ENCODE measurements at regions of chr15 and their contacts with region 1.

Region 1: GRCh38 chr15:31326156-31326732 is 391 bp upstream of the KLF13 start:
- DNase-seq: peak; percentile 97 to 100 (median 98)
- ATAC-seq: peak; percentile 80 to 92 (median 84)
- H3K4me3 ChIP-seq: peak overlapping the region; percentile 63 to 97 (median 81)
- H3K27ac ChIP-seq: peak overlapping the region; percentile 85 to 99 (median 98)
- H3K4me1 ChIP-seq: peaks cover 0 to 26% (median 11%) of the 10 kb centered on the region in 3 donors
- H3K27me3 ChIP-seq: no peaks in the 10 kb centered on the region
- CTCF ChIP-seq: no peak

Region 2: DNA sequence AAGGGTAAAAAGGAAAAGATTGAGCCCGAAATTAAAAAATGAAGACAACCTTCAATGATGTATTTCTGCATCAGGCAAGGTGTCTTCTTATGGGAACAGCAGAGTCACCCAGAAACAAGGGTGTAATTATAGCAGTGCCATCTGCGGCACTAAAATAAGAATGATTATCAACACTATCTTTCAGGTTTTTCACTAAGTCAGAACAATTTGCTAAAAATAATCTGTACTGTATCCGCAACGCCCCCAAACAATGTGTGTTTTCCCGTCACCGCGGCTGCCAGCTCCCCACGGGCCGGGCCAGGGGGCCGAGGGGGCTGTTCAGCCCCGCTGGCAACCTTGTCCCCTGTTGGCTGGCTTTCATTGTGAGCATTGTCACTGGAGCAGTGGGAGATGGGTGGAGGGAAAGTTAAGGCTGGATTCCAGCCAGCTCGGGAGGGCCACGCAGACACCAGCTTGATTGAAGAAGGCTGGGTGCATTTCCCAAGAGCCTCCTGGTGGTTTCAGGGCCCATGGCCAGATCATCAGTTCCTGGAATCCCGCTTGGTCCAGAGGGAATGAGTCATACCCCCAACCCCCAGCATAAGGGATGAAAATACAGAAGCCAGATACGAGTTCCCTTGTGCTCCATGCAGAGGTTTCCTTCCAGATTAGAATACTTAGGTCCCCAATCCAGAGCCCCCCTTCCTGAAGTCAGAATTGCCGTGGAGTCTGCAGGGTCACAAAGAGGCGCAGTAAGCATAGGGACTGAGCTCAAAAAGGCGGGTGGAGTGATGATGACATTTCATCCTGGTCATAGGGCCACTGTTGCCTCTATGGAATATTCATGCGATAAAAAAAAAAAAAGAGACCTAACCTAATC is 89.8 kb before region 1 on chr15:
- intact Hi-C with region 1: loop called in 1 of 3 experiments (anchors 10 kb)
- DNase-seq: peak in 5 of 6 donors; percentile 26 to 81 (median 64)
- ATAC-seq: peak; percentile 64 to 96 (median 90)
- H3K4me3 ChIP-seq: no peak overlapping the region
- H3K27ac ChIP-seq: peak overlapping the region in 3 of 4 donors; percentile 39 to 83 (median 78)
- H3K4me1 ChIP-seq: peaks cover 0 to 20% (median 0%) of the 10 kb centered on the region in 3 donors
- H3K27me3 ChIP-seq: no peaks in the 10 kb centered on the region
- CTCF ChIP-seq: no peak

Region 3: DNA sequence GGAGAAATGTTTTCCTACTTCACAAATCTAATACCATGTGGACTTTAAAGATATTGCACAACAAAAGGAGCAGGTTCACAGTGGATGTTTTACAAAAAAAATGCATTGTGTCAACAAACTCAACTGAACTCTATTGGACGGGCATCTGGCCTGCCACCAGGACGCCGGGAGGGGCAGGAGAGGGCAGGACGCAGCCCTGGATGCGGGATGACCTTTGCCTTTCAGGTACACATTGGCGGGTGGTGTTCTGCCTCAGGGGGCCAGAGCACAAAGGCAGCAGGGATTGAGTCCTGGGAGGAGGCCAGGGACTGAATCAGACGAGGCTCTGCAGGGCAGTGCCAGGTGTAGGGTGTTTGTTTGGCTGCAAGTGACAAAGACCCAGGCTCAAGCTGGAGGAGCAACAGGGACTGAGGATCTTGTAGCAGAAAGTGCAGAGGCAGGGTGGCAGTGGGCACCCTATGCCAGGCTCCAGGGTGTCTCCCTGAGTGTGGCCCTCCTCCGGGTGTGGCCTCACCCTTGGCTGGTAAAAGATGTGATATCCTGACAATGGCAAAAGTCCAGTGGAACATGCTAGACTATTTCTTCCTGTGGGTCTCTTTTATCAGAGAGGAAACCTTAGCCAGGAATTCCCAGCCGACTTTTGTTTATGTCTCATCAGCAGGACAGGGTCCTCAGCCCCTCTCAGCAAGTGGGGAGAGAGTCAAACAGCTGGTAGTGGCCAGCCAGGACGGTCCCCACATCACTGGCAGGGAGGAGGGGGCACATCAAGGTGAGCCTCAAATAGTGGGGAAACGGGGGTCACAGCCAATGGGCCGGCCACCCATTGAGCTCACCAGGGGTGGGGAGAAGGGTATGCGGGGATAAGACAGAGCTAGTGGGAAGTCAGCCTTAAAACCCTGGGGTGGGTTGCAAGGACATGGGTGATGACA is 29.3 kb before region 1 on chr15:
- intact Hi-C with region 1: no loop called
- DNase-seq: peak; percentile 74 to 88 (median 84)
- ATAC-seq: peak; percentile 77 to 90 (median 88)
- H3K4me3 ChIP-seq: no peak overlapping the region
- H3K27ac ChIP-seq: peak overlapping the region in 3 of 4 donors; percentile 55 to 80 (median 57)
- H3K4me1 ChIP-seq: peaks cover 0 to 16% (median 12%) of the 10 kb centered on the region in 3 donors
- H3K27me3 ChIP-seq: no peaks in the 10 kb centered on the region
- CTCF ChIP-seq: no peak

Region 4: DNA sequence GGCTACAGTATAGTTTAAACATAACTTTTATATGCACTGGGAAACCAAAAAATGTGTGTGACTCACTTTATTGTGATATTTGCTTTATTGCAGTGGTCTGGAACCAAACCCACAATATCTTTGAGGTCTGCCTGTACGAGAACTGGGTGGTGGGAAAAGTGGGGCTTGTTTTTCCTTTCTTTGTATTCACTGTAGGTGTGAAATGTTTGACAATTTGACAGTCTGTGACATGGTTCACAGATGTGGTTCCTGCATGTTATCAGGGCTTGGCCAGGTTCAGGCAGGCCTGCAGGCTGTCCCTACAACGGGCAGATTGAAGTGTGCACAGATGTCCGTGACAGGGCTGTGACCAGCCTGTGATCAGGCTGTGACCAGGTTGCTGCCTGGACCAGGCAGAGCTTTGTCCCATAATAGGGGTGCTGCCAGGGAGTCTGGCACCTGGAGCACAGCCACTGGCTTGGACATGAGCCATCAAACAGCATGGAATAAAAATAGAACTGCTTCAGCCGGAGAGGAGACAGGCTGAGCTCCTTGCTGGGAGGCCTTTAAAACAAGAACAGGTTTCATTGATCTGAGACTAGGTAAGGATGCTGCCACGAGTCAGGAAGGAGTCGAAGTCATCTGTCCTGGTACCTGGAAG is 61.4 kb after region 1 on chr15:
- intact Hi-C with region 1: loop called in 1 of 3 experiments (anchors 10 kb)
- DNase-seq: peak; percentile 80 to 97 (median 94)
- ATAC-seq: peak; percentile 82 to 89 (median 87)
- H3K4me3 ChIP-seq: no peak overlapping the region
- H3K27ac ChIP-seq: peak overlapping the region in 3 of 4 donors; percentile 32 to 78 (median 65)
- H3K4me1 ChIP-seq: peaks cover 0 to 19% (median 17%) of the 10 kb centered on the region in 3 donors
- H3K27me3 ChIP-seq: no peaks in the 10 kb centered on the region
- CTCF ChIP-seq: no peak

Measured in pancreas (tissue), 10 donors.